IMR-90 (cell line): ENCODE measurements at regions of chr10 and their contacts with region 1.

Region 1: GRCh38 chr10:24851629-24852028 is 100.8 kb downstream of the PRTFDC1 start:
- DNase-seq: peak; percentile 54
- ATAC-seq: peak; percentile 29; the same call in 1 of the 2 replicates
- H3K4me3 ChIP-seq: no peak overlapping the region
- H3K27ac ChIP-seq: no peak overlapping the region
- H3K4me1 ChIP-seq: no peaks in the 10 kb centered on the region; the same call in 1 of the 2 replicates
- H3K27me3 ChIP-seq: no peaks in the 10 kb centered on the region
- CTCF ChIP-seq: no peak
- POLR2A ChIP-seq: no peak
- RAD21 ChIP-seq: no peak

Region 2: GRCh38 chr10:24777196-24777595 is 74.4 kb before region 1 on chr10:
- CTCF ChIA-PET with region 1: no interaction called
- POLR2A ChIA-PET with region 1: interaction called, 11 read pairs
- dilution Hi-C with region 1: no loop called
- in situ Hi-C with region 1: no loop called
- intact Hi-C with region 1: no loop called
- DNase-seq: no peak
- ATAC-seq: no peak
- H3K4me3 ChIP-seq: no peak overlapping the region
- H3K27ac ChIP-seq: no peak overlapping the region
- H3K4me1 ChIP-seq: no peaks in the 10 kb centered on the region
- H3K27me3 ChIP-seq: no peaks in the 10 kb centered on the region
- CTCF ChIP-seq: no peak
- POLR2A ChIP-seq: no peak
- RAD21 ChIP-seq: no peak

Region 3: GRCh38 chr10:24804956-24805355 is 46.7 kb before region 1 on chr10:
- CTCF ChIA-PET with region 1: no interaction called
- POLR2A ChIA-PET with region 1: no interaction called
- dilution Hi-C with region 1: no loop called
- in situ Hi-C with region 1: no loop called
- intact Hi-C with region 1: no loop called
- DNase-seq: no peak
- ATAC-seq: no peak
- H3K4me3 ChIP-seq: no peak overlapping the region
- H3K27ac ChIP-seq: no peak overlapping the region
- H3K4me1 ChIP-seq: no peaks in the 10 kb centered on the region
- H3K27me3 ChIP-seq: no peaks in the 10 kb centered on the region; the same call in 1 of the 2 replicates
- CTCF ChIP-seq: no peak
- POLR2A ChIP-seq: no peak
- RAD21 ChIP-seq: no peak

Region 4: GRCh38 chr10:24826019-24826418 is 25.6 kb before region 1 on chr10:
- CTCF ChIA-PET with region 1: interaction called, 11 read pairs
- POLR2A ChIA-PET with region 1: no interaction called
- dilution Hi-C with region 1: no loop called
- in situ Hi-C with region 1: no loop called
- intact Hi-C with region 1: no loop called
- DNase-seq: peak; percentile 78
- ATAC-seq: peak; percentile 74
- H3K4me3 ChIP-seq: no peak overlapping the region
- H3K27ac ChIP-seq: no peak overlapping the region
- H3K4me1 ChIP-seq: peaks cover 2% of the 10 kb centered on the region
- H3K27me3 ChIP-seq: no peaks in the 10 kb centered on the region
- CTCF ChIP-seq: no peak
- POLR2A ChIP-seq: no peak
- RAD21 ChIP-seq: no peak

Region 5: DNA sequence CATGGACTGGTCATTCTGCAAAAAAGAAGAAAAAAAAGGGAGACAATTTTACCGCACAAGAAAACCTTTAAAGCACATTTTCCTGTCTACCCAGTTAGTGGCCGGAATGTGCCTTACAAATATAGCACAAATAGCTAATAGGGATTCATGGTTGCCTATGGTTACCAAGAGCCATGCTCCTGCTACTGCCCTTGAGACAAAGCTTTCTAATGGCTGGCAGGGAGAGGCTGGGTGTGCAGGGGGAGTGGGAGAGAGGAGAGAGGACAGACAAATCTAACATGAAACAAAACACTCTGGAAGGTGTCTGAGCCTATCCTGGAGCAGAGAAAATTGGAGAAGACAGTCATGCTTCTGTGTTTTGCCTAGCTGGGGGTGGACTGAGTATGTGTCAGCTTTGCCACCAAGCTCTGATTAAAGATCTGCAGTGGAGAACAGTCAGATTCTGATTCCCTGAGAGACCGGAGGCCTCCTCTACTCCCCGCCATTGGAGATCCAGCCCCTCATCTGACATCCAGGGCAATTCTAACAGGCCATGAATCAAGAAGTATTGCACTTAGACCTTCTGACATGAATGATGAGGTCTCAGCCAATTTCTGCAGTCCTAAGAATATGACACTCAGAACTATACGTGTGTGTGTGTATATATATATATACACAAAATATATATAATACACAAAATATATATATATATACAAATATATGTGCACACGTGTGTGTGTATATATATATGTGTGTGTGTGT is 20.6 kb after region 1 on chr10:
- CTCF ChIA-PET with region 1: interaction called, 12 read pairs
- POLR2A ChIA-PET with region 1: interaction called, 4 read pairs
- dilution Hi-C with region 1: no loop called
- in situ Hi-C with region 1: no loop called
- intact Hi-C with region 1: no loop called
- DNase-seq: no peak
- ATAC-seq: no peak
- H3K4me3 ChIP-seq: no peak overlapping the region
- H3K27ac ChIP-seq: no peak overlapping the region
- H3K4me1 ChIP-seq: peaks cover 9% of the 10 kb centered on the region
- H3K27me3 ChIP-seq: no peaks in the 10 kb centered on the region
- CTCF ChIP-seq: no peak
- POLR2A ChIP-seq: no peak
- RAD21 ChIP-seq: no peak

Region 6: GRCh38 chr10:24885551-24886299 is 34.1 kb after region 1 on chr10:
- CTCF ChIA-PET with region 1: no interaction called
- POLR2A ChIA-PET with region 1: interaction called, 11 read pairs
- dilution Hi-C with region 1: no loop called
- in situ Hi-C with region 1: no loop called
- intact Hi-C with region 1: no loop called
- DNase-seq: peak; percentile 76
- ATAC-seq: peak; percentile 45
- H3K4me3 ChIP-seq: no peak overlapping the region
- H3K27ac ChIP-seq: no peak overlapping the region
- H3K4me1 ChIP-seq: peaks cover 7% of the 10 kb centered on the region; the same call in 1 of the 2 replicates
- H3K27me3 ChIP-seq: no peaks in the 10 kb centered on the region
- CTCF ChIP-seq: no peak
- POLR2A ChIP-seq: no peak
- RAD21 ChIP-seq: no peak